ENCODE measurements at regions of chr3 and their contacts with region 1.

Region 1: GRCh38 chr3:151146071-151146730 is 56.8 kb downstream of the GPR171 start:
- DNase-seq: peak; percentile 83
- H3K4me3 ChIP-seq: peak overlapping the region; percentile 10
- H3K27ac ChIP-seq: no peak overlapping the region
- H3K4me1 ChIP-seq: peaks cover 12% of the 10 kb centered on the region
- CTCF ChIP-seq: peak; percentile 96

Region 2: DNA sequence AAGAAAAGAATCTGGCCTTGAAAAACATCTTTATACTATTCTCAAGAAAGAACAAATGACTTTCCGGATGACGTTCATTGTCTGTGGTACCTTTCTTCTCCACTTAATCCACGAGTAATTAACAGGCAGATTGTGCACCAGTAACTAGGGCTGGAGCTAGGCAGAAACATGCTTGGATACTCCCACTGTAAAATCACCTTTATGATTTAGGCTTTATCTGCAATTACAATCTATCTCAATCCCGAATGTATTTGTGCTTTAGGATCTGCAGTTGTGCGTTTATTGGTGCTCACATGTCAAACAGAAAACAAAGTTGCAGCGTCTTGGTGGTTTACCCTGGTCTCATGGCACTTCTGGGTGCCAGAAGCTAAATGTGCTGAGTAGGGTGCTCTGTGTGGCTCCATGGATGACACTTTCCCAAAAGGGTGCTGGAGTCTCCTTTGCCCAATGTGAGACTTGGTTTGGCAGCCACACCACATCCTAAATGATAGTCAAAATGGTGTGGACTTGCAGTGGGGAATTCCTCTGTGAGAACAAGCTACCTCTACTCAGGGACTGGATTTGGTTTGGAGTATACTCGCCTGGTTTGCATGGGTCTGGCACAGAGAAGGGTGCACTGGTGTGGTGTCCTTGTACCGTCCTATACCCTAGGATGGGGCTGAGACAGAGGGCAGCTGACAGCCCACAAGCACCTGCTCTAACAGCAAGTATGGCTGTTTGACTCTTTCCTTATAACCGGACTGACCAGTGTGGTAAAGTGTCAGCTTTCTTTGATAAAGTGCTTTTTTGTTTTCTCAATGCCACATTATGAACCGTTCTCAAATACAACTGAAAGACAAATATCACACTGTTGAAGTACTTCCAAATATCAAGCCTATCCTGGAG is 607.6 kb before region 1 on chr3:
- CTCF ChIA-PET with region 1: no interaction called
- POLR2A ChIA-PET with region 1: no interaction called
- intact Hi-C with region 1: loop called (anchors 10 kb)
- DNase-seq: no peak
- H3K4me3 ChIP-seq: no peak overlapping the region
- H3K27ac ChIP-seq: no peak overlapping the region
- H3K4me1 ChIP-seq: peaks cover 11% of the 10 kb centered on the region
- CTCF ChIP-seq: no peak

Region 3: DNA sequence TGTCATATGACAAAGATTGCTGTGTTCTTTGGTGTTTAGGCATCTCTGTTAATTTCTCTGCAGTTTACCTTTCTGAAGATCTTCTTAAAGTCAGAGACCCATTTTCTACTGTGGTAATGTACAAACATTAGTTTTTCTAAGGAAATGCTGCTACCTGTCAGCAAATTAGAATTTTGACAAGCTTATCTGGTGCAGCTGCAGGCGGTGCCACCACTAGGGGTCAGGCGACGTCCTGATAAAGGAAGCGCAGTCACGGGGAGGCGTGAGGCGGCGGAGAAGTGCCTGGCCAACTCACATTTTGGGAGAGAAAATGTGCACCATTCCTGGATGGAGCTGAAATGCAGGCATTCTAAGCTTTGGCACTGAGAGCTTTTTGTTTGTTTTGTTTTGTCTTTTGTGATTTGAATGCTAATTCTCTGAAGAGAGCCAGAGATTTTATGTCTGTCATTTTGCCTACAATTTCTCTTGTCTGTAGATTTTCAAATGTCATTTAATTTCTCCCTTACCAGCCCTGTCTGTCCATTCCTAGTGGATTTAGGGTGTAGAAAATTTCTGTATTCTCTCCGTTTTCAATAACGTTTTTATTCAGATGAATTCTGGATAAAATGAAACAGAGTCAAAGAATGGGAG is 358.3 kb before region 1 on chr3:
- CTCF ChIA-PET with region 1: no interaction called
- POLR2A ChIA-PET with region 1: no interaction called
- intact Hi-C with region 1: loop called (anchors 2 kb)
- DNase-seq: peak; percentile 76
- H3K4me3 ChIP-seq: no peak overlapping the region
- H3K27ac ChIP-seq: no peak overlapping the region
- H3K4me1 ChIP-seq: no peaks in the 10 kb centered on the region
- CTCF ChIP-seq: peak; percentile 98

Region 4: GRCh38 chr3:150925751-150926201 is 220.4 kb before region 1 on chr3:
- CTCF ChIA-PET with region 1: no interaction called
- POLR2A ChIA-PET with region 1: interaction called, 3 read pairs
- intact Hi-C with region 1: loop called (anchors 1 kb)
- DNase-seq: peak; percentile 47
- H3K4me3 ChIP-seq: no peak overlapping the region
- H3K27ac ChIP-seq: no peak overlapping the region
- H3K4me1 ChIP-seq: no peaks in the 10 kb centered on the region
- CTCF ChIP-seq: peak; percentile 81

Region 5: GRCh38 chr3:151067158-151067557 is 79.0 kb before region 1 on chr3:
- CTCF ChIA-PET with region 1: no interaction called
- POLR2A ChIA-PET with region 1: interaction called, 5 read pairs
- intact Hi-C with region 1: loop called (anchors 1 kb)
- DNase-seq: peak; percentile 60
- H3K4me3 ChIP-seq: no peak overlapping the region
- H3K27ac ChIP-seq: no peak overlapping the region
- H3K4me1 ChIP-seq: no peaks in the 10 kb centered on the region
- CTCF ChIP-seq: peak; percentile 78

Measured in OCI-LY7 (cell line).